ENCODE measurements at regions of chr2 and their contacts with region 1.

Region 1: DNA sequence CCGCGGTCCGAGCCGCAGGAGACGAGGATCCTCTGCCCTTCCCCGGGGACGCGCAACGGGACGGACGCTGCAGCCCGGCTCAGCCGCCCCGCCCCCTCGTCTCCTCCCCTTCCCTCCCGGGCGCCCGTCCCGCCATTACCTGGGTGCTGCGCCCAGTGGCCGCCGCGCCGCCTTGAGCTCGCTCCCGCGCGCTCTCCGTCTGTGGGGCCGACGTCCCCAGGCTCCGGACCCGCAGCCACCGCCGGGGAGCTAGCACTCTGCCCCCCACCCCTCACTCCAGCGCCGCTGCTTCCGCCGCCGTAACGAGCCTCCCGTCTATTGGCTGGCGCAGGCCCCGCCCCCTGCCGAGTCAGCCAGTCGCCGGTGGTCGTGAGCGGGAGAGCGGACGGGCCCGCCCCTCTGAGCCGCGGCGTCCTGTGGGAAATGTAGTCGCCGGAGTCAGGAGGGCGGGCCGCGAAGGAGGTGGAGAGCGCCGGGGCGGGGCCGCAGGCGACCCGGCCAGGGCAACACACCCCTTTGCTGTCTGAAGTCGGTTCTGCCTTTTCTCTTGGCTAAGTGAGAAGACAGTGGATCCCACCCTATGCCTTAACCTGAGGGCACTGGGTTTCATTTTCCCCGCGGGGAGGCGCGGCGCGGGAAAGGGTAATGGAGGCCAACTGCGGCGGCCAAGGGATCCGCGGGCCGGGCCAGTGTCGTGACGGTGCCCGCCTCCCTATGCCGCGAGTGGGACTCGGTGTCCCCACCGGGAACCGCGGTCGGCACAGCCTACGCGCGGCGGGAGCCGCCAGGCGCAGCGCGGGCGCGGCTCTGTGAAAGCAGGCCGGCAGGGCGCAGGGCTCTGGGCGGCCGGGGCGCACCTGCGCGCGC is at the start of gene SAP130:
- DNase-seq: peak; percentile 98 to 99 (median 98)
- H3K4me3 ChIP-seq: peak within 1 kb of the TSS; percentile 100
- H3K27ac ChIP-seq: peak within 1 kb of the TSS; percentile 45 to 96
- H3K4me1 ChIP-seq: no peaks in the 10 kb centered on the region
- H3K27me3 ChIP-seq: no peaks in the 10 kb centered on the region
- CTCF ChIP-seq: peak in 1 of 3 donors; percentile 10
- EP300 ChIP-seq: no peak
- POLR2A ChIP-seq: peak; percentile 32
- total RNA-seq, gene SAP130: 6.1 to 28.3 (median 25.3) TPM

Region 2: GRCh38 chr2:127701193-127701650 is 326.8 kb before region 1 on chr2 and contains the start of gene SFT2D3:
- intact Hi-C with region 1: loop called in 1 of 4 experiments (anchors 5 kb)
- DNase-seq: peak; percentile 87 to 92 (median 87)
- H3K4me3 ChIP-seq: peak within 1 kb of the TSS; percentile 85
- H3K27ac ChIP-seq: peak within 1 kb of the TSS; percentile 84 to 92
- H3K4me1 ChIP-seq: peaks cover 3% of the 10 kb centered on the region
- H3K27me3 ChIP-seq: no peaks in the 10 kb centered on the region
- CTCF ChIP-seq: no peak
- EP300 ChIP-seq: no peak
- POLR2A ChIP-seq: peak; percentile 64
- total RNA-seq, gene SFT2D3: 6.1 to 9.8 (median 6.9) TPM

Region 3: GRCh38 chr2:127844973-127845372 is 183.1 kb before region 1 on chr2:
- intact Hi-C with region 1: no loop called
- DNase-seq: no peak
- H3K4me3 ChIP-seq: no peak overlapping the region
- H3K27ac ChIP-seq: no peak overlapping the region
- H3K4me1 ChIP-seq: no peaks in the 10 kb centered on the region
- H3K27me3 ChIP-seq: no peaks in the 10 kb centered on the region
- CTCF ChIP-seq: no peak
- EP300 ChIP-seq: no peak
- POLR2A ChIP-seq: no peak

Region 4: GRCh38 chr2:127859712-127860085 is 168.3 kb before region 1 on chr2:
- intact Hi-C with region 1: loop called in 2 of 4 experiments (anchors 10 kb)
- DNase-seq: peak in 3 of 5 donors; percentile 30 to 53 (median 32)
- H3K4me3 ChIP-seq: no peak overlapping the region
- H3K27ac ChIP-seq: no peak overlapping the region
- H3K4me1 ChIP-seq: peaks cover 9% of the 10 kb centered on the region
- H3K27me3 ChIP-seq: no peaks in the 10 kb centered on the region
- CTCF ChIP-seq: no peak
- EP300 ChIP-seq: no peak
- POLR2A ChIP-seq: no peak

Region 5: GRCh38 chr2:127953128-127953718 is 74.8 kb before region 1 on chr2:
- intact Hi-C with region 1: no loop called
- DNase-seq: peak; percentile 20 to 56 (median 27)
- H3K4me3 ChIP-seq: no peak overlapping the region
- H3K27ac ChIP-seq: no peak overlapping the region
- H3K4me1 ChIP-seq: peaks cover 7% of the 10 kb centered on the region
- H3K27me3 ChIP-seq: no peaks in the 10 kb centered on the region
- CTCF ChIP-seq: no peak
- EP300 ChIP-seq: no peak
- POLR2A ChIP-seq: no peak

Region 6: DNA sequence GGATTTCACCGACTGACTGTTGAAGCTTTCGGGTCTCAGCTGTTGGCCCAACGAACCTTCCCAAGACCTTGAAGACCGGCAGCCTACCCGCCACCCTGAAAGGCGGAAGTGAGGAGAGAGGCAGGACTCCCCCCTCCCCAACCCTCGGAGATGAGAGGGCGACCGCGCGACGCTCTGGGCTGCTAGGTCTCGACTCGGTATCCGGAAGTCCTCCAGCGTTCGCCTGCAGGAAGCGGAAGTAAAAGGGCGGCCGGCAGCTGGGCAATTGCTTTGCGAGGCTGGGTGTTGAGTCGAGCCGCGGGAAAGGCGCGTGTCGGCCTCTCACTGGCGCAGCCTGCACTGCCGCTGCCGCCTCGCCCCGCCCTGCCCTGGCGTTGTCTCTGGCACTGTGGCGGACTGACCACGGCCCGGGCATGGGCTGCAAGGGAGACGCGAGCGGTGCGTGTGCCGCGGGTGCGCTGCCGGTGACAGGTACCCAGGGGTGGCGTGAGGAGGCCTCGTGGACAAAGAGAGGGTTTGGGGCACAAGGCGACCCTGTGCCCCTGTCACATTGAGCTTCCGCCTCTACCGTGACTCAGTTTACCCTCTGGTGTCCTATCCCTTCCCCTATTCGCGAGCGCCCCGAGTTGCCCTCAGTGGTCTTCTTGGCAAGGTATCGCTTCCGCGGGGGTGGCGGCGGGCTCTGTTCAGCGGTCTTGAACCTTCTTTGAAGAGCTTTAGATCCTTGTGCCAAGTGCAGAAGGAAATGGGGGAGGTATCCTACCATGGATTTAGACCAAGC is 63.1 kb after region 1 on chr2 and contains the start of gene UGGT1:
- intact Hi-C with region 1: loop called in 1 of 4 experiments (anchors 5 kb)
- DNase-seq: peak; percentile 86 to 94 (median 91)
- H3K4me3 ChIP-seq: peak within 1 kb of the TSS; percentile 93
- H3K27ac ChIP-seq: peak within 1 kb of the TSS in 1 of 2 donors; percentile 35
- H3K4me1 ChIP-seq: no peaks in the 10 kb centered on the region
- H3K27me3 ChIP-seq: no peaks in the 10 kb centered on the region
- CTCF ChIP-seq: no peak
- EP300 ChIP-seq: no peak
- POLR2A ChIP-seq: peak; percentile 62
- total RNA-seq, gene UGGT1: 16.0 to 32.3 (median 22.5) TPM